Caco-2 (cell line): ENCODE measurements at regions of chr9 and their contacts with region 1.

Region 1: GRCh38 chr9:91629718-91630117 is 206.1 kb upstream of the NFIL3 start:
- DNase-seq: no peak
- H3K4me3 ChIP-seq: no peak overlapping the region
- H3K4me3 Mint-ChIP-seq: no peak overlapping the region
- H3K27ac Mint-ChIP-seq: no peak overlapping the region
- H3K4me1 ChIP-seq: no peaks in the 10 kb centered on the region
- H3K4me1 Mint-ChIP-seq: no peaks in the 10 kb centered on the region
- H3K27me3 ChIP-seq: no peaks in the 10 kb centered on the region
- H3K27me3 Mint-ChIP-seq: no peaks in the 10 kb centered on the region
- CTCF ChIP-seq: no peak

Region 2: DNA sequence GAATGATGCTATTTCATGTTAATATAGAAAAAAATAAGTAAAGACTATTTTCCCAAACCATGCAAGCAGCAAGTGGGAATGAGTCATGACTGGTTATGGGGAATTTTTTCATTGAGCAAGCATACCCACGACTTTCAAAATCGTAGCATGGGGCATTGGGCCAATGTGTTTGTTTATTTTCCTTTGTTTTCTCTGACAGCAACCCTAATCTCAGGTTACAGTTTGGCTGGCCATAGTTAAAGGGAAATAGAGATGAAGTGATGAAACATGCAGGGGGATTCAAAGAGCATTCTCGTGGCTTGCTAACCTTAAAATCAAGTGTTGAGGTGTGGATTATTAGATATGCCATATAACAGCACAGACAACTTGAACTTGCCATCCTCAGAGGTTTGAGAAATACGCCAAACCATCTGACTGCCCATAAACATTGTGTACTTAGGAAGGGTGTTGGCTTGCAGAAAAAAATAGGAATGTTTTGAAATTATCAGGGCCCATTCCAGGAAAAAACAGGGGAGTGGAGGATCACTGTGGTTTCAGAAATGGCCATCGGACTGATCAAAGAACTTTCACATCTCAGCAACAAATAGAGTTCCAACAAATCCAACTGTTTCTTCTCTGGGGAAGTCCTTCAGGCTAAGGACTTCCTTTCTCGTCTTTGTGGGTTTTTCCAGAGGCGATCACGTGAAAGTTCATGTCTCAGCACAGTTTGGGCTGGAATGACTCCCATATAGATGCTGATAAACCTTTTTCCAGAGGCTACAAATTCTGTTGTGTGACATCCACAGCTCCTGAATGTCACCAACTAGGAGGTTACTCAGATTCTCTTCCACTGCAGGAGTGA is 569.0 kb before region 1 on chr9:
- CTCF ChIA-PET with region 1: no interaction called
- POLR2A ChIA-PET with region 1: no interaction called
- intact Hi-C with region 1: no loop called
- DNase-seq: no peak
- H3K4me3 ChIP-seq: no peak overlapping the region
- H3K4me3 Mint-ChIP-seq: no peak overlapping the region
- H3K27ac Mint-ChIP-seq: no peak overlapping the region
- H3K4me1 ChIP-seq: no peaks in the 10 kb centered on the region
- H3K4me1 Mint-ChIP-seq: no peaks in the 10 kb centered on the region
- H3K27me3 ChIP-seq: no peaks in the 10 kb centered on the region
- H3K27me3 Mint-ChIP-seq: no peaks in the 10 kb centered on the region
- CTCF ChIP-seq: no peak

Region 3: GRCh38 chr9:91643481-91644077 is 13.9 kb after region 1 on chr9:
- CTCF ChIA-PET with region 1: no interaction called
- POLR2A ChIA-PET with region 1: no interaction called
- intact Hi-C with region 1: loop called (anchors 1 kb)
- DNase-seq: no peak
- H3K4me3 ChIP-seq: no peak overlapping the region
- H3K4me3 Mint-ChIP-seq: no peak overlapping the region
- H3K27ac Mint-ChIP-seq: no peak overlapping the region
- H3K4me1 ChIP-seq: no peaks in the 10 kb centered on the region
- H3K4me1 Mint-ChIP-seq: peaks cover 7% of the 10 kb centered on the region
- H3K27me3 ChIP-seq: no peaks in the 10 kb centered on the region
- H3K27me3 Mint-ChIP-seq: no peaks in the 10 kb centered on the region
- CTCF ChIP-seq: no peak